Upper lobe of right lung (tissue), 1 donor: ENCODE measurements at regions of chr19 and their contacts with region 1.

Region 1: GRCh38 chr19:56162258-56162657 is 13.6 kb upstream of the GALP start:
- DNase-seq: no peak
- ATAC-seq: peak; percentile 10
- H3K4me3 ChIP-seq: no peak overlapping the region
- H3K27ac ChIP-seq: no peak overlapping the region
- H3K4me1 ChIP-seq: no peaks in the 10 kb centered on the region
- H3K27me3 ChIP-seq: no peaks in the 10 kb centered on the region
- CTCF ChIP-seq: no peak

Region 2: GRCh38 chr19:56026769-56027168 is 135.5 kb before region 1 on chr19:
- intact Hi-C with region 1: no loop called
- DNase-seq: no peak
- ATAC-seq: no peak
- H3K4me3 ChIP-seq: no peak overlapping the region
- H3K27ac ChIP-seq: no peak overlapping the region
- H3K4me1 ChIP-seq: no peaks in the 10 kb centered on the region
- H3K27me3 ChIP-seq: no peaks in the 10 kb centered on the region
- CTCF ChIP-seq: no peak

Region 3: DNA sequence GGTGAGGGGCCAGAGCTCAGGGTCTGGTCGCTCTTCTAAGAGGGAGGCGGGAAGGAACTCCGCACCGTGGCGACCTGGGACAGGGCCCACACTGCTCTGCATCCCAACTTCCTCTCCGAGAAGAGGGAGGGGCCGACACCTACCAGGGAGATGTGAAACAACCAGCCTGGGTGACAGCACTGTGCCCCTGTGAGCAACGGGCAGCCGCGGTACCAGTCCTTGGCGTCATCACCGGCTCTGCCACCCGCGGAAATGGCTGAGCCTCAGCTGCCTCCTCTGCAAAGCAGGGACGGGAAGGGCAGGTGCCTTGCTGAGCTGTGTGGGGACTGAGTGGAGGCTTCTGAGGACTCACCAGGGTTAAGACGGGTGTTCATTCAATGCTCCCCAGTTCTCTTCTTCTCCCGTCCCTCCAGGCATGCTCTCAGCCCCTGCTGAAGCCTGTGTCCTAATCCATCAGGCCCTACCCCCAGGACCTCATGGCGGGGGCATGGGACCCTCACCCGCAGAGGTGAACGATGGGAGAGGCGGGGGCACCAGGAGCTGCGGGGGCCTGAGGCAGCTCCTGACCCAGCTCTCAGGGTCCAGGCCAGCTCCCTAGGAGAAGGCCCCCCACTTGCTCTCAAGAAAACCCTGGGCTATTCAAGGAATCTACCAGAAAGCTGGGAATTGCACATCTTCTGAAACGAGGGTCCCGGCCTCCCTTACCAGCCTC is 50.5 kb before region 1 on chr19:
- intact Hi-C with region 1: loop called (anchors 10 kb)
- DNase-seq: peak; percentile 81
- ATAC-seq: peak; percentile 82
- H3K4me3 ChIP-seq: no peak overlapping the region
- H3K27ac ChIP-seq: peak overlapping the region; percentile 56
- H3K4me1 ChIP-seq: peaks cover 75% of the 10 kb centered on the region
- H3K27me3 ChIP-seq: no peaks in the 10 kb centered on the region
- CTCF ChIP-seq: no peak